ENCODE measurements at regions of chr6 and their contacts with region 1.

Region 1: DNA sequence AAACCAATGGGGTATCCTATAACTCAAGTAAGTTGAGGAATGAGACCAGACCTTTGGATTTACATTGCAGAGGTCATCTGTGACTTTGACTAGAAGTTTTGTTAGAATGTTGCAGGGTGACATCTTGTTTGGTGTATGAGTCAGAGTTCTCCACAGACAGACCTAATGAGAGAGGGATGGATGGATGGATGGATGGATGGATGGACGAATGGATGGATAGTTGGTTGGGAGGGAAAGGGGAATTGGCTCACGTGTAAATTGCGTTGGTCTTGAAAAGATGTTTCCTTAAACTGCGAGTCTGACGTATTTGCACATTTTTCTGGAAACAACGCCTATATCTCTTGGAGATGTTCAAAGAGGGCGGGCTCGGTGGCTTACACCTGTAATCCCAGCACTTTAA is 1.0 kb upstream of the MTRES1 start:
- DNase-seq: no peak
- ATAC-seq: no peak
- H3K4me3 ChIP-seq: no peak overlapping the region
- H3K4me3 Mint-ChIP-seq: peak overlapping the region; percentile 60 to 93 (median 65)
- H3K27ac ChIP-seq: no peak overlapping the region
- H3K27ac Mint-ChIP-seq: no peak overlapping the region
- H3K4me1 ChIP-seq: peaks cover 3 to 21% of the 10 kb centered on the region in 2 experiments
- H3K4me1 Mint-ChIP-seq: peaks cover 22 to 31% (median 30%) of the 10 kb centered on the region in 3 donors
- H3K27me3 ChIP-seq: no peaks in the 10 kb centered on the region
- H3K27me3 Mint-ChIP-seq: no peaks in the 10 kb centered on the region

Region 2: GRCh38 chr6:107114213-107114905 is 87.4 kb after region 1 on chr6:
- CTCF ChIA-PET with region 1: interaction called, 6 to 10 read pairs
- POLR2A ChIA-PET with region 1: no interaction called
- DNase-seq: peak; percentile 7 to 85 (median 47)
- ATAC-seq: peak; percentile 68 to 76 (median 74)
- H3K4me3 ChIP-seq: peak overlapping the region in 1 of 2 donors; percentile 71
- H3K4me3 Mint-ChIP-seq: peak overlapping the region; percentile 76 to 81 (median 81)
- H3K27ac ChIP-seq: no peak overlapping the region
- H3K27ac Mint-ChIP-seq: no peak overlapping the region
- H3K4me1 ChIP-seq: peaks cover 11 to 18% of the 10 kb centered on the region in 2 experiments
- H3K4me1 Mint-ChIP-seq: peaks cover 12 to 19% (median 18%) of the 10 kb centered on the region in 3 donors
- H3K27me3 ChIP-seq: peaks cover 0 to 12% of the 10 kb centered on the region in 2 experiments
- H3K27me3 Mint-ChIP-seq: peaks cover 6 to 7% of the 10 kb centered on the region in 2 donors